ENCODE measurements at regions of chr7 and their contacts with region 1.

Region 1: DNA sequence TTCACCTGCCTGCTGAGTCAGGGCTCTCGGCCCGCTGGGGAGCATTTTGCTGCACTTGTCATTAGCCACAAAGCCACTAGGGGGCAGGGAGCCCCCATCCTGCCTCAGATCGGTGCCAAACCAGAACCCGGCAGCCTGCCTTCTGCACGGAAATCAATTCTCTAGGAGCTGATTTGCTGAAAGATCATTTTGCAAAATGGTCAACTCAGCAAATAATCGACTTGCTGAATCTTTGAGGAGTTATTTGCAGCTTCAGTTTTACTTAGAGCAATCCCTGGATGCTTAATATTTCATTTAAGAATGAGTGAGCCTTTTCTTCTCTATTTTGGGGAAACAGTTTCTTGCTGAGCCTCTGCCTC is 1.7 kb upstream of the GIMAP8 start:
- DNase-seq: peak; percentile 93
- H3K4me3 Mint-ChIP-seq: peak overlapping the region; percentile 53
- H3K27ac Mint-ChIP-seq: peak overlapping the region; percentile 87
- H3K4me1 Mint-ChIP-seq: peaks cover 57% of the 10 kb centered on the region
- H3K27me3 Mint-ChIP-seq: no peaks in the 10 kb centered on the region

Region 2: GRCh38 chr7:150413640-150414081 is 35.1 kb before region 1 on chr7:
- CTCF ChIA-PET with region 1: no interaction called
- POLR2A ChIA-PET with region 1: no interaction called
- DNase-seq: no peak
- H3K4me3 Mint-ChIP-seq: no peak overlapping the region
- H3K27ac Mint-ChIP-seq: no peak overlapping the region
- H3K4me1 Mint-ChIP-seq: peaks cover 5% of the 10 kb centered on the region
- H3K27me3 Mint-ChIP-seq: no peaks in the 10 kb centered on the region

Region 3: DNA sequence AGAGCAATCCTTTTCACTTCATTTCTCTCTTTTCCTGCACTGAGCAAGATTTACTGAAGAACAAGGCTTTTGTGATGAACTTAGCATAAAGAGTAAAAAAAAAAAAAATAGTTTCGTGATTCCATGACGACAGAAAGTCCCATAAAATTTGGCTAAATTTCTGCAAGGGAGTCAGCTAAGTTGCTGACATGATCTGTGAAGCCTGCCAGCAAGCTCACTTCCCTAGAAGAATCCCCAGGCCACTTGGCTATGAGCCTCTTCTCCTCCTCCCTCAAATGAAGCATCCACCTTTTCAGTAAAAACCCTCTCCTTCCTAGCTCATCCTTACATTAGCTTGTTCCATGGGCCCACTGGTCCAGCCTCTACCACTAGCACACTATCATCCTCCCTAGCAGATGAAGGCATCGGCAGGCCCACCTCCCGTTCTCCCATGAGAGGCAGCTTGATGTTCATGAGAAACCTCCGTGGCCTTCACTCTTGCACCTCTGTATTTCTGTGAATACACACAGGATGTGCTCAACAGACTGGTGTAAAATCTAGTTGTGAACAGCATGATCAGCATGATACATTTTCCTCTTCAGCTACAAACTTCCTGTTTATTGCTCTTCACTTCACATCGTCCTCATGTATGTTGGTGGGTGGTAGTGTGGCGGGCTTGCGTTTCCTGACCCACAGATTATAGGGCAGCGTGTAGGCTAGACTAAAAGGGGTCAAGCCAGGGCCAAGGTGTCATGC is 32.6 kb after region 1 on chr7:
- CTCF ChIA-PET with region 1: interaction called, 12 read pairs
- POLR2A ChIA-PET with region 1: interaction called, 192 read pairs
- DNase-seq: peak; percentile 70
- H3K4me3 Mint-ChIP-seq: peak overlapping the region; percentile 81
- H3K27ac Mint-ChIP-seq: peak overlapping the region; percentile 99
- H3K4me1 Mint-ChIP-seq: peaks cover 95% of the 10 kb centered on the region
- H3K27me3 Mint-ChIP-seq: no peaks in the 10 kb centered on the region

Region 4: DNA sequence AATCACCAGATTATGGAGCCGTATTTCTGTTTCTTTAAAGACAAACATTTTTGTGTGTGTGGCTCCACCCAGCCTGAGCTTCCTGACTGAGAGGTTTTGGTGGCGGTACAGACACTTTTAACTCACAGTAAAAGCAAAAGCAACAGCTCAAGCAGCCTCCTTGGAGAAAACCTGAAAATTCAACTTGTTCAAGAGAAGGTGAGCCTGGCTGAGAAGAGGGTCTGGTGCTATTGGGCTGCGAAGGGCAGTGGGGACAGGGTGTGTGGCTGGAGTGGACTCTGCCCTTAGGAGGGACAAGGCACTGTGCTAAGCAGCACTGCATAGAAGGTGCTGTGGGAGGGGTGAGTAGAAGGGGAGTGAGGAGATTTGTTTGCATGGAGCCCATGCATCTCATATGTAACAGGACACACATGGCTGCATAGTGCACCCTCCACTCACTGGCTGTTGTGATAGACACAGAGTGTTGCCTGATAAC is 66.0 kb after region 1 on chr7 and contains the start of gene GIMAP7:
- CTCF ChIA-PET with region 1: interaction called, 158 read pairs
- POLR2A ChIA-PET with region 1: interaction called, 396 read pairs
- DNase-seq: peak; percentile 77
- H3K4me3 Mint-ChIP-seq: peak within 1 kb of the TSS; percentile 100
- H3K27ac Mint-ChIP-seq: peak within 1 kb of the TSS; percentile 100
- H3K4me1 Mint-ChIP-seq: peaks cover 55% of the 10 kb centered on the region
- H3K27me3 Mint-ChIP-seq: no peaks in the 10 kb centered on the region
- total RNA-seq, gene GIMAP7: 169 to 171 TPM

Region 5: GRCh38 chr7:150631866-150632864 is 183.4 kb after region 1 on chr7 and contains the start of gene GIMAP6:
- CTCF ChIA-PET with region 1: interaction called, 16 read pairs
- POLR2A ChIA-PET with region 1: interaction called, 39 read pairs
- DNase-seq: peak; percentile 56
- H3K4me3 Mint-ChIP-seq: peak within 1 kb of the TSS; percentile 98
- H3K27ac Mint-ChIP-seq: peak within 1 kb of the TSS; percentile 89
- H3K4me1 Mint-ChIP-seq: peaks cover 68% of the 10 kb centered on the region
- H3K27me3 Mint-ChIP-seq: no peaks in the 10 kb centered on the region
- total RNA-seq, gene GIMAP6: 84.9 to 85.9 TPM

Region 6: DNA sequence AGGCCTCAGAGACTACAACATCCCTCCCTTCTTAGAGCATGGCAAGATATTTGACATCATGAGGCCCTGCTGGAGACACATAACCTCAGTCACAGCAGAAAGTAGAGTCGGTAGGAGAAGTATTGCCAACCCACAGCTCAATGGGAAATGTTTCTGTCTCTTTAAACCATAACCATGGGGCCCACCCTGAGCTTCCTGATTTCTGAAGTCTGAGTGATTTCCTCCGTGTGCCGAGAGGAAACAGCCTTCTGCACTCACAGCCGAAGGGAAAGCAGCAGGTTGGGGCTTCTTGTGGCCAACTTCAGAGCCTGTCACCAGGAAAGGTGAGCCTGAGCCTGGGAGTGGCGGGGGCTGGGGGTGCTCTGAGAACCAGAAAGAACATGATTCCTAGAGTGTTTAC is 267.6 kb after region 1 on chr7 and contains the start of gene GIMAP1:
- CTCF ChIA-PET with region 1: interaction called, 15 read pairs
- POLR2A ChIA-PET with region 1: interaction called, 32 read pairs
- DNase-seq: peak; percentile 69
- H3K4me3 Mint-ChIP-seq: peak within 1 kb of the TSS; percentile 97
- H3K27ac Mint-ChIP-seq: peak within 1 kb of the TSS; percentile 79
- H3K4me1 Mint-ChIP-seq: peaks cover 62% of the 10 kb centered on the region
- H3K27me3 Mint-ChIP-seq: no peaks in the 10 kb centered on the region
- total RNA-seq, gene GIMAP1: 18.8 to 21.0 TPM

Region 7: GRCh38 chr7:150753826-150754603 is 305.2 kb after region 1 on chr7:
- CTCF ChIA-PET with region 1: interaction called, 105 read pairs
- POLR2A ChIA-PET with region 1: interaction called, 127 read pairs
- DNase-seq: no peak
- H3K4me3 Mint-ChIP-seq: no peak overlapping the region
- H3K27ac Mint-ChIP-seq: peak overlapping the region; percentile 94
- H3K4me1 Mint-ChIP-seq: peaks cover 55% of the 10 kb centered on the region
- H3K27me3 Mint-ChIP-seq: no peaks in the 10 kb centered on the region